HAP-1 (cell line): ENCODE measurements at regions of chr4 and their contacts with region 1.

Region 1: DNA sequence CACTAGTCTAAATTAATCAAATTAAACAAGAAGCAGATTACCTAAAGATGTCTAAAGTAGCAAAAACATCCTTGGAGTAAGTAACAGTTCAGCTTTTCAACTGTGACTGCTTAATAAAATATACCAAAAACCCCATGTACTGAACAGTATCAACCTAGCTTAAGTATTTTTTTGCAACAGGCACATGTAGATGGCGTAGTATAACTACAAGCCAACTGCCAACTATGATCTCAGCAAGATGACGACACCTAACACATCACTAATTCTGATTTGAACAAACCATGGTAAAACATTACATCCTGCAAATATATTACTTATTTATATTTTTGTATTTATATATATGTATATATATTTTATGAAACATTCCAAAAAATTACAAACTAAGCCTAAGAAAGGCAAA is 24.5 kb downstream of the DHX15 start:
- DNase-seq: no peak
- H3K4me3 ChIP-seq: no peak overlapping the region
- H3K4me1 ChIP-seq: peaks cover 5% of the 10 kb centered on the region
- H3K27me3 ChIP-seq: no peaks in the 10 kb centered on the region

Region 2: GRCh38 chr4:24686871-24687680 is 127.2 kb after region 1 on chr4:
- in situ Hi-C with region 1: loop called (anchors 10 kb)
- DNase-seq: peak; percentile 45 to 82
- H3K4me3 ChIP-seq: no peak overlapping the region
- H3K4me1 ChIP-seq: no peaks in the 10 kb centered on the region; the same call in 1 of the 2 replicates
- H3K27me3 ChIP-seq: no peaks in the 10 kb centered on the region